Activated CD8-positive, alpha-beta memory T cell treated with anti-CD3 and anti-CD28 coated beads, Interleukin-2, amount 10 ng/mL, durations not matched to agents 7 days and 5 days (primary cell): ENCODE measurements at regions of chr17 and their contacts with region 1.

Region 1: DNA sequence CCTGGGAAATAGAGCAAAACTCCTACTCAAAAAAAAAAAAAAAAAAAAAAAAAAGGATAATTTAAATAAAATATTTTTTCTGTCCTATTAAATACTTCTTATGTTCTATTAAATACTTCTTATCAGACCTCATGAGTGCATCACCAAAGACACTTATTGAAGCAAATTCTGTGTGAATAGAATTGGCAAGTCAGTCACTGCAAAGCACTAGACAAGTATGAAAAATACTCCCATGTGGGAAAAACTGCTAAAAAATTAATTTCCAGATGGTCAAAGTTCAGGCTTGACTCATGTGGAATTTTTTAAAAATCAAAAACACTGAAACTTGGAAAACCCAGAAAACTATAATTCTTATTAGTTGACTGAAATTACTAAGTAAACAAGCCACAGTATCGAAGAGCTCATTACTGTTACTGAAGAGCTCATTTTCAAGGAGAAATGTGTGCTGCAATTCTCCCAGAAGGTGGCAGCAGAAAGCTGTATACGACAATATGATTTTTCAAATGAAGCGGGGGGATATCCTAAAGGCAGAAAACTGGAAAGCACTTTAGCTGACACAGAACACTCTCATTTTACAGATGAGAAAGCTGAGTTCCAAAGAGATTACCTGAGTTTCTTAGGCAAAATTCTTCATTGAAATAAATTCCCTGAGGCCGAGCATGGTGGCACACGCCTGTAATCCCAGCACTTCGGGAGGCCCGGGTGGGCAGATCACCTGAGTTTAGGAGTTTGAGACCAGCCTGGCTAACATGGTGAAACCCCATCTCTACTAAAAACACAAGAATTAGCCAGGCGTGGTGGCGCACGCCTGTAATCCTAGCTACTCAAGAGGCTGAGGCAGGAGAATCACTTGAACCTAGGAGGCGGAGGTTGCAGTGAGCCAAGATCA is 15.9 kb upstream of the FBXO47 start:
- DNase-seq: peak; percentile 70
- ATAC-seq: peak; percentile 60
- H3K4me3 Mint-ChIP-seq: no peak overlapping the region
- H3K27ac Mint-ChIP-seq: no peak overlapping the region
- H3K4me1 Mint-ChIP-seq: peaks cover 7% of the 10 kb centered on the region
- H3K27me3 Mint-ChIP-seq: peaks cover 11% of the 10 kb centered on the region

Region 2: GRCh38 chr17:38853292-38854219 is 129.5 kb before region 1 on chr17 and contains the start of gene RPL23:
- CTCF ChIA-PET with region 1: interaction called, 11 read pairs
- DNase-seq: peak; percentile 96
- ATAC-seq: peak; percentile 88
- H3K4me3 Mint-ChIP-seq: peak within 1 kb of the TSS; percentile 97
- H3K27ac Mint-ChIP-seq: peak within 1 kb of the TSS; percentile 98
- H3K4me1 Mint-ChIP-seq: peaks cover 42% of the 10 kb centered on the region
- H3K27me3 Mint-ChIP-seq: no peaks in the 10 kb centered on the region
- total RNA-seq, gene RPL23: 831 to 1,130 TPM

Region 3: DNA sequence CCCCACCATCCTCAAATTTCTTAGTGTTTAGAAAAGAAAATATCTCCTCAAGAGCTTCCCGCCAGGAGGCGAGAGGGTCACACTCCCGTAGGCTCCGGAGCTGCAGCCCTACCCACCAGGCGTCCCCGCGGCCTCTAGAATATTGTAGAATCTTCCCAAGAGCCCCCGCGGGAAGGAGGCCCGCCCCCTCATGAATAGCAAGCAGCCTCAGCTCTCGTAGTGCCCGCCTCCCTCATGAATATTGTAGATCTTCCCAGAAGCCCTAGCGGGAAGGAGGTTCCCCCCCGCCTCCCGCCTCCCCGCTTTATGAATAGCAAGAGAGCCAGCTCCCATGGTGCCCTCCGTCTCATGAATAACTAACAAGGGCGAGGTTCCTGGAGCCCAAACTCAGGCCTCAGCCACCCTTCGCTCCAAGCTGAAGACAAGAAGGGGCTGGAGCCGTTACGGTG is 15.8 kb before region 1 on chr17 and contains the start of gene FBXO47:
- CTCF ChIA-PET with region 1: interaction called, 10 read pairs
- DNase-seq: peak; percentile 93
- ATAC-seq: peak; percentile 100
- H3K4me3 Mint-ChIP-seq: peak within 1 kb of the TSS; percentile 68
- H3K27ac Mint-ChIP-seq: peak within 1 kb of the TSS; percentile 73
- H3K4me1 Mint-ChIP-seq: peaks cover 10% of the 10 kb centered on the region
- H3K27me3 Mint-ChIP-seq: peaks cover 2% of the 10 kb centered on the region
- total RNA-seq, gene FBXO47: 0.18 TPM in 1 of 2 experiments, not detected in the other

Region 4: GRCh38 chr17:39144416-39144840 is 161.3 kb after region 1 on chr17:
- CTCF ChIA-PET with region 1: interaction called, 25 read pairs
- DNase-seq: no peak
- ATAC-seq: no peak
- H3K4me3 Mint-ChIP-seq: no peak overlapping the region
- H3K27ac Mint-ChIP-seq: no peak overlapping the region
- H3K4me1 Mint-ChIP-seq: no peaks in the 10 kb centered on the region
- H3K27me3 Mint-ChIP-seq: peaks cover 3% of the 10 kb centered on the region

Region 5: DNA sequence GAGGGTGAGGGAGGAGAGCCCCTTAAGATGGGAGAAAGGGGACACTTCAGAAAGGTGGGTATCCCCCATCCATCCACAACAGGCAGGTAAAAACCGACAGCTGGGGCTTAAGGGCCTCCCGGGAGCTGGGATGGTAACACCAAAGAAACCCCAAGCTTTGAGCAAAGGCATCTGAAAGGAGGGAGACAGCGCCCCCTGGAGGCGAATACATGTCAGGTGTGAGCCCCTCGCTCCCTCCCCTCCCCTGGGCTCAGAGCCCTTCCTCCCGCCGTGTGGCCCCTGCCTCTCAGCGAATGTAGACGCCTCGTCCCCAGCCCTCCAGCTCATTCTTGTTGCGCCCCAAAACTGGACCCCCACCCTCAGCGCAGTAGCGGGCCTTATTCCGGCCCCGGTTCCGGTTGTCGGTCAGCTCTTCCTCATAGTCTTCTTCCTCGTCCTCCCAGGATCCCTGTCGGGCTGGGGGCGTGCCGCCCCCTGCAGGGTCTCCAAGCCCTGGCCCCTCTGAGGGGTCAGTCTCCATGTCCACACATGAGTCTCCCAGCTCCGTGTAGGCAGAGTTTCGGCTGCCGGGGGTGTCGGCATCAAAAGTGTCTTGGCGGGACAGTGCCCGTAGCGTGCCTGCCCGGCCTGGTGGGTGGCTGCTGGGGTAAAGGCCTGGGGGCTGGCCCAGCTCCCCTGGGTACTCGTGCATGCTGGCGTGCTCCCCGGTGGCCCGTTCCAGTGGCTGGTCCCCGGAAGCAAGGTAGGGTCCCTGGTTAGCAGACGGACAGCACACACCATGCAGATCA is 192.0 kb after region 1 on chr17:
- CTCF ChIA-PET with region 1: interaction called, 93 read pairs
- DNase-seq: peak; percentile 84
- ATAC-seq: peak; percentile 85
- H3K4me3 Mint-ChIP-seq: no peak overlapping the region
- H3K27ac Mint-ChIP-seq: no peak overlapping the region
- H3K4me1 Mint-ChIP-seq: peaks cover 23% of the 10 kb centered on the region
- H3K27me3 Mint-ChIP-seq: no peaks in the 10 kb centered on the region

Region 6: DNA sequence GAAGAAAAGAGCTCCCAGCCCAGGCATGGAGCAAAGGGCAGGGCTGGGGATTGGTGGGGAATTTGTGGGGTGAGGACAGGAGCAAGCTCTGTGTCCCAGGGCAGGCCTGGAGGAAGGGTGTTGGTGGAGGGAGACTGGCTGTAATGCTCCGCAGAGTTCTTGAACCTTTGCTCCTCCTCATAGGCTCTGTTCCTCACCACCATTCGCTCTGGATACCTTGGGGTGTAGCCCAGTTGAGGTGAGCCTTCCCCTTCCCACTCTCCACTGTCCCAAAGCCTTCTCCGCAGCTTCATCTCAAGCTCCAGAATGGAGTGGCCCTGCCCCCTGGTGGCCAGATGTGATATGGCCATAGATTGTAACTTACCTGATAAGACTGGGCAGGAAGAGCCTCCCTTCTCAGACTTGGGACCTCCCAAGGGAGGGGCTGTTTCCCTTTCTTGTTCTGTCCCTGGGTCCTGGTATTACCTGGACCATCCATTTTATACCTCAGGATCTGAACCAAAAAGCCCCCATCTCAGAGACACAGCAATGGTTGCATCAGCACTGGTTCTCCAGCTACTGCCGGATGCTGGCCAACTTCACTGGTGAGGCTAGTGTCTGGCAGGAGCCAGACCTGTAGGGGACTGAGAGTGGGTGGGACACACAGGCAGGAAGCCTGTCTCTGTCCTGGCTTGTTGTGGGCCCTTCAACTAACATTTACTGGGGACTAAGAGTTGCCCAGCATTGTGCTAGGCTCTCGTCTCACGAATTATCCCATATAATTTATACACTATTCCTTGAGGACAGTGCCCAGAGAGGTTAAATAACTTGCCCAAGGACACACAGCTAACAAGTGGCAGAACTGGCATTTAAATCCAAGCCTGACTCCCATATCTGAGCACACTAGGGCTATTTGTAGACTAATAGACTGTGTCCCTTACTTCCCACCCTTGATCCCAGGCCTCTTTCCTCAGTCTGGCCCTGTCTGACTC is 261.8 kb after region 1 on chr17:
- CTCF ChIA-PET with region 1: interaction called, 35 read pairs
- DNase-seq: peak; percentile 91
- ATAC-seq: peak; percentile 90
- H3K4me3 Mint-ChIP-seq: no peak overlapping the region
- H3K27ac Mint-ChIP-seq: no peak overlapping the region
- H3K4me1 Mint-ChIP-seq: peaks cover 13% of the 10 kb centered on the region
- H3K27me3 Mint-ChIP-seq: no peaks in the 10 kb centered on the region